Tibial artery (tissue), 4 donors: ENCODE measurements at regions of chr4 and their contacts with region 1.

Region 1: GRCh38 chr4:39977489-39978377 is at the start of gene PDS5A:
- DNase-seq: peak; percentile 74 to 92
- H3K4me3 ChIP-seq: peak within 1 kb of the TSS; percentile 80 to 97
- H3K27ac ChIP-seq: peak within 1 kb of the TSS; percentile 90 to 96
- H3K4me1 ChIP-seq: peaks cover 0 to 18% (median 11%) of the 10 kb centered on the region in 4 donors
- H3K27me3 ChIP-seq: no peaks in the 10 kb centered on the region
- CTCF ChIP-seq: peak; percentile 77 to 91

Region 2: GRCh38 chr4:39469429-39470077 is 508.2 kb before region 1 on chr4:
- intact Hi-C with region 1: loop called (anchors 5 kb)
- DNase-seq: peak; percentile 65 to 71
- H3K4me3 ChIP-seq: no peak overlapping the region
- H3K27ac ChIP-seq: peak overlapping the region in 1 of 2 donors; percentile 18
- H3K4me1 ChIP-seq: no peaks in the 10 kb centered on the region
- H3K27me3 ChIP-seq: no peaks in the 10 kb centered on the region
- CTCF ChIP-seq: peak; percentile 83 to 92

Region 3: GRCh38 chr4:39697740-39698423 is 279.9 kb before region 1 on chr4 and contains the start of gene UBE2K:
- intact Hi-C with region 1: loop called (anchors 1 kb)
- DNase-seq: peak; percentile 80 to 94
- H3K4me3 ChIP-seq: peak within 1 kb of the TSS; percentile 84 to 95
- H3K27ac ChIP-seq: peak within 1 kb of the TSS; percentile 90 to 91
- H3K4me1 ChIP-seq: peaks cover 0 to 46% (median 7%) of the 10 kb centered on the region in 4 donors
- H3K27me3 ChIP-seq: no peaks in the 10 kb centered on the region
- CTCF ChIP-seq: no peak